ENCODE measurements at regions of chr10 and their contacts with region 1.

Region 1: GRCh38 chr10:84264611-84265141 is 19.8 kb downstream of the RGR start:
- ATAC-seq: peak; percentile 79 to 100 (median 100)
- H3K4me3 ChIP-seq: no peak overlapping the region
- H3K27ac ChIP-seq: no peak overlapping the region
- H3K4me1 ChIP-seq: peaks cover 3 to 5% of the 10 kb centered on the region in 2 donors

Region 2: DNA sequence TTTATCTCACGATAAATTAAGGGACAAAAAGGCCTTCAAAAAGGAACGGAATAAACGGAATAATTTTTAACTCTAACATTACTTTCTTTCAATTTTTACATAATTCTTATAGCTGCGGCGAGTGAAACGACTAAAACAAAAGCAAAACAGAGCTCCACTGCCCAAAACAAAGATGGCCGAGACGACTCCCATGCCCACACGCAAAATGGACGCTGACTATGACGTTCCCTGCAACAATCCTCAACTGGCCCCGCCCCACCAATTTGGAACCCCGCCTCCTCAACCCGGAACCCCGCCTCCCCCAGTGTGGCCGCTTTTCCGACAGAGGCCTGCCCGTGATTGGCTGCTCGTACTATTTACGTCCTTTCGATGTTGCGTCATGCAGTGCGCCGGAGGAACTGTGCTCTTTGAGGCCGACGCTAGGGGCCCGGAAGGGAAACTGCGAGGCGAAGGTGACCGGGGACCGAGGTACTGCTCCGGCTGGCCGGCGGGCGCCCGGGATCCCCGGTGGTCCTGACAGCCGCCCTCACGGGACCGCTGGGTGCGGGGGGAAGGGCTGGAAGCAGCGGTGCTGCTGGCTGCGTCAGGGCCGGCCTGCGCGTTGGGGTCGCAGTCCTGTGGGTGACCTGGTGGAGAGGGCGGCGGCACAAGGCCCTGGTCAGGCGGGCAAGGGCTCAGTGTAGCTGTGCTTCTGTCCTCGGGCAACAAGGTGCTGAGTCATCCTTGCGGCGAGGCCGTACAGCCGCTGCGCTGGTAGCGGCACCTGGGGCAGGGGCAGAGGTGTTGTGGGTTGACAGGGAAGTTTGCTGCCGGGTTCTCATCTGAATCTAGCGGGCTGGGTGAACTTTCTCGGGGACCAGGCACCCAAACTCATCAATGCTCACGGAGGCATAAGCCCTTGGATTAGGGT is 125.3 kb before region 1 on chr10 and contains the start of gene GHITM:
- in situ Hi-C with region 1: no loop called
- ATAC-seq: peak; percentile 92 to 98 (median 96)
- H3K4me3 ChIP-seq: peak within 1 kb of the TSS; percentile 56 to 89 (median 73)
- H3K27ac ChIP-seq: peak within 1 kb of the TSS; percentile 81 to 95
- H3K4me1 ChIP-seq: peaks cover 9 to 19% of the 10 kb centered on the region in 2 donors
- total RNA-seq, gene GHITM: 132 to 306 (median 173) TPM

Region 3: DNA sequence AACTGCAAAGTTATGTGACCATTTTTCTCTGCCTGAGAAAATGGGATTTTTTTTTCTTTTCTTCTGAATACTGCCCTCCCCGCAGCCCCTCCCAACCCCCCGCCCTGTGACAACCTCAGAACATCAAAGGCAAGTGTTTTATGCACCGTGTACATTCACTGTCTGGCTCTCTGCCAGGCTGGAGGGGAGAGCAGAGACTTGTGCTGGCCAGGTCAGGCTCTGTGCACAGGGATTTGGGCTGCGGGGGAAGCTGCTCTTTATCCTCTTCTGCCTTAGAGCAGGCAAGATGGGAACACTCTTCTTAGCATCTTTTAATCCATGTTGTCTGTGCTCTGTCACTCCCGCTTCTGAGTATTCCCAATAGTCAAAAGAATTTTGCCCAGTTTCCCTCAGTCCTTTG is 258.9 kb after region 1 on chr10:
- in situ Hi-C with region 1: loop called in 4 of 9 experiments (anchors 10 to 25 kb)
- ATAC-seq: peak; percentile 26 to 71 (median 62)
- H3K4me3 ChIP-seq: no peak overlapping the region
- H3K27ac ChIP-seq: no peak overlapping the region
- H3K4me1 ChIP-seq: peaks cover 19 to 34% of the 10 kb centered on the region in 2 donors

Measured in motor neuron (in vitro differentiated cells).